Cardiac septum (tissue), 1 donor: ENCODE measurements at regions of chr5 and their contacts with region 1.

Region 1: DNA sequence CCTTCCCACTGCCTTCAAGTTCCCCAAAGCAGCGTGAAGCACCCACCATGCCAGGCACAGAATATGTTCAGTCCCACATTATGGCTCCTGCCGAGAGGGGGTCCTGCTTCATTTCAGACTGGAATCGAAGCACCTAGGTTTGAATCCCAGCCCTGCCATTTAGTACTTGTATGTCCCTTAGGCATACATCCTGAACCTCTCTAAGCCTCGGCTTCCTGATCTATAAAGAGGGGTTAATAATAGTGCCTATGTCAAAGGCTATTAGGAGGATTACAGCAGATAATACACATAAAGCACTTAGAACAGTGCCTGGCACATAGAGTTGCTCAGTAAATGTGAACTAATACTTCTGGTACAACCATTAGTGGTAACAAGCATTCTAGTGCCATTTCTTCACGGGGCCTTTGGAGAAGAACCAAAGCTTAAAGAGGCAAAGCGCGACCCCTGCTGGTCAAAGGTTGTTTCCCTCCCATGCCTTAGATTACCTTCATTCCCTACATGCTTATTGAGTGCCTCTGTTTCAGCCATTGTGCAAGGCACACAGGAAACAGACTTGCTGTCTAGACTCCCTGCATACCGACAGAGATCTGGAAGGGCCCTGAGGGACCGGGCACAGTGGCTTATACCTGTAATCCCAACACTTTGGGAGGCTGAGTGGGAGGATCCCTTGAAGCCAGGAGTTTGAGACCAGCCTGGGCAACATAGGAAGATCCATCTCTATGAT is 98.2 kb downstream of the PPARGC1B start:
- DNase-seq: peak; percentile 86

Region 2: DNA sequence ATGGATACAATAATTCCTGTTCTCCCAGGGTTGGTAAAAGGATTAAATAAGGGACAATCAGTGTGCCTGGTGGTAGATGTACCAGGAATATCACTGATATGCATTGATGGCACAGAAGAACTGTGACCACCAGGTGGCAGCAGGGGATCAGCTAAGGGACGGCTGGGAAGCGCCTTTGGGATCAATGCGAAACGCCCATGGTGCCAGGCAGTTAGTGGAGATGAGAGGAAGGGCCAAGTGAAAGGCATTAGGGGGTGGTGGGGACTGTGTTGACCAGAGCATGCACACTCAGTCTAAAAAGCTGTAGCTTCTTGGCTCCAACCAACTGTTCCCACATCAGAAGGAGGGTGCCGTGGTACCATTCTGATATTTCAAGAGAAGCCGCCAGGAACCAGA is 191.5 kb before region 1 on chr5:
- intact Hi-C with region 1: loop called (anchors 1 kb)
- DNase-seq: no peak

Region 3: GRCh38 chr5:149656576-149657182 is 171.6 kb before region 1 on chr5:
- intact Hi-C with region 1: loop called (anchors 5 kb)
- DNase-seq: peak; percentile 77

Region 4: GRCh38 chr5:149731639-149732323 is 96.5 kb before region 1 on chr5:
- intact Hi-C with region 1: loop called (anchors 2 kb)
- DNase-seq: peak; percentile 76

Region 5: GRCh38 chr5:149759986-149760853 is 68.1 kb before region 1 on chr5:
- intact Hi-C with region 1: loop called (anchors 5 kb)
- DNase-seq: peak; percentile 68

Region 6: DNA sequence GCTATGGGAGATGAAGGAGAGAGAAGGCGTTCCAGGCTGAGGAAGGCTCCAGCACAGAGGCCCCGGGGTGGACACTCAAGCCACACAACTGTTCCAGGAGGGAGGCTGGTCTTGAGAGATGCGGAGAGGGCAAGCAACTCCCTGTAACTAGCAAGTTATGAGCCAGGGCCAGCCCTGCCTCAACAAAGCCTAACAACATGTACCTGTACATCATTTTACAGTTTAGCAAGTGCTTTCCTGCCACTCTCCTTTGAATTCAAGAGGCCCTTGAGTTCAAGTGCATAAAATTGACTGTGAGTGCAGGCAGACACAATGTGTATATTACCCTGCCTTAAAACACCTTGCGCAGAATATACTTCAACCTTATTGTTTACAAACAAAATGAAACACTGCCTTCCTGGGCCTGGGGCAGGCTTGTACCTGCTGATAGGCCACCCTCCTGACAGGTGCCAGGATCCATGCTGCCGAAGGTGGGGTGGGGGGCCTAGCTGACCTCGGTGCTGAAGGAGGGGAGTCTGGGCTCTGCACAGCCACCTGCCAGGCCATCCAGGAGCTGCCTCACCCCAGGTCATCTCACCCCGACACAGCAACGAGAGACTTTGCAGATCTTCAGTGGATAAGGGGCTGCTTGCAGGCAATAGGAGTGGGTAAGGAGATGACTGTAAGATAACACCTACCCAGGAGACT is 18.2 kb before region 1 on chr5:
- intact Hi-C with region 1: loop called (anchors 2 kb)
- DNase-seq: no peak